Activated B cell treated with CpG ODN at 0.5 μM for 24 hours (primary cell): ENCODE measurements at regions of chr5 and their contacts with region 1.

Region 1: GRCh38 chr5:178120868-178121357 is 7.6 kb downstream of the N4BP3 start:
- DNase-seq: peak; percentile 56
- ATAC-seq: peak; percentile 67
- H3K4me3 Mint-ChIP-seq: peak overlapping the region; percentile 55
- H3K27ac Mint-ChIP-seq: peak overlapping the region; percentile 65
- H3K4me1 Mint-ChIP-seq: peaks cover 66% of the 10 kb centered on the region
- H3K27me3 Mint-ChIP-seq: no peaks in the 10 kb centered on the region
- CTCF ChIP-seq: peak; percentile 25

Region 2: DNA sequence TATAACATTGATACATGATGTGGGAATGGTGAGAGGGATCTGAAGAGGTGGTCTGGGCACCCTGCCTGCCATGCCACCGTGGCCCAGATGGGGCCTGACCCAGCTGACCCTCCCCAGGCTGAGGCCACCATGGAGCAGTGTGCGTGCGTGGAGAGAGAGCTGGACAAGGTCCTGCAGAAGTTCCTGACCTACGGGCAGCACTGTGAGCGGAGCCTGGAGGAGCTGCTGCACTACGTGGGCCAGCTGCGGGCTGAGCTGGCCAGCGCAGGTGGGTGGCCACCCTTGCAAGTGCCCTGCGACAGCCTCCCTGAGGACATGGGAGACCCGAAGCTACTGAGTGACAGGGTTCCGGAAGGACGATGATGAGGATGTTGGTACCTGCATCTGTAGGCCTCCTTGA is 17.1 kb after region 1 on chr5:
- CTCF ChIA-PET with region 1: interaction called, 11 read pairs
- POLR2A ChIA-PET with region 1: interaction called, 22 read pairs
- intact Hi-C with region 1: no loop called
- DNase-seq: no peak
- ATAC-seq: no peak
- H3K4me3 Mint-ChIP-seq: no peak overlapping the region
- H3K27ac Mint-ChIP-seq: no peak overlapping the region
- H3K4me1 Mint-ChIP-seq: peaks cover 6% of the 10 kb centered on the region
- H3K27me3 Mint-ChIP-seq: no peaks in the 10 kb centered on the region
- CTCF ChIP-seq: no peak